ENCODE measurements at regions of chr19 and their contacts with region 1.

Region 1: GRCh38 chr19:860481-861101 is 1.1 kb downstream of the CFD start:
- DNase-seq: peak; percentile 94
- H3K4me3 ChIP-seq: peak overlapping the region; percentile 47 to 63 (median 48)
- H3K27ac ChIP-seq: peak overlapping the region in 3 of 4 donors; percentile 58 to 79 (median 65)
- H3K4me1 ChIP-seq: peaks cover 16 to 46% (median 44%) of the 10 kb centered on the region in 4 donors
- H3K27me3 ChIP-seq: peaks cover 0 to 71% (median 29%) of the 10 kb centered on the region in 4 donors
- CTCF ChIP-seq: peak in 2 of 3 experiments; percentile 11 to 23
- EP300 ChIP-seq: no peak
- POLR2A ChIP-seq: no peak

Region 2: GRCh38 chr19:664913-665443 is 195.6 kb before region 1 on chr19:
- intact Hi-C with region 1: loop called (anchors 5 kb)
- DNase-seq: no peak
- H3K4me3 ChIP-seq: peak overlapping the region; percentile 26 to 51 (median 41)
- H3K27ac ChIP-seq: peak overlapping the region; percentile 10 to 46 (median 20)
- H3K4me1 ChIP-seq: peaks cover 38 to 48% (median 46%) of the 10 kb centered on the region in 4 donors
- H3K27me3 ChIP-seq: no peaks in the 10 kb centered on the region
- CTCF ChIP-seq: peak; percentile 92 to 99 (median 97)
- EP300 ChIP-seq: no peak
- POLR2A ChIP-seq: no peak

Region 3: GRCh38 chr19:801030-801860 is 59.3 kb before region 1 on chr19:
- intact Hi-C with region 1: loop called (anchors 10 kb)
- DNase-seq: no peak
- H3K4me3 ChIP-seq: peak overlapping the region; percentile 23 to 50 (median 36)
- H3K27ac ChIP-seq: peak overlapping the region; percentile 95 to 100 (median 99)
- H3K4me1 ChIP-seq: peaks cover 60 to 75% (median 69%) of the 10 kb centered on the region in 4 donors
- H3K27me3 ChIP-seq: no peaks in the 10 kb centered on the region
- CTCF ChIP-seq: no peak
- EP300 ChIP-seq: no peak
- POLR2A ChIP-seq: no peak

Region 4: DNA sequence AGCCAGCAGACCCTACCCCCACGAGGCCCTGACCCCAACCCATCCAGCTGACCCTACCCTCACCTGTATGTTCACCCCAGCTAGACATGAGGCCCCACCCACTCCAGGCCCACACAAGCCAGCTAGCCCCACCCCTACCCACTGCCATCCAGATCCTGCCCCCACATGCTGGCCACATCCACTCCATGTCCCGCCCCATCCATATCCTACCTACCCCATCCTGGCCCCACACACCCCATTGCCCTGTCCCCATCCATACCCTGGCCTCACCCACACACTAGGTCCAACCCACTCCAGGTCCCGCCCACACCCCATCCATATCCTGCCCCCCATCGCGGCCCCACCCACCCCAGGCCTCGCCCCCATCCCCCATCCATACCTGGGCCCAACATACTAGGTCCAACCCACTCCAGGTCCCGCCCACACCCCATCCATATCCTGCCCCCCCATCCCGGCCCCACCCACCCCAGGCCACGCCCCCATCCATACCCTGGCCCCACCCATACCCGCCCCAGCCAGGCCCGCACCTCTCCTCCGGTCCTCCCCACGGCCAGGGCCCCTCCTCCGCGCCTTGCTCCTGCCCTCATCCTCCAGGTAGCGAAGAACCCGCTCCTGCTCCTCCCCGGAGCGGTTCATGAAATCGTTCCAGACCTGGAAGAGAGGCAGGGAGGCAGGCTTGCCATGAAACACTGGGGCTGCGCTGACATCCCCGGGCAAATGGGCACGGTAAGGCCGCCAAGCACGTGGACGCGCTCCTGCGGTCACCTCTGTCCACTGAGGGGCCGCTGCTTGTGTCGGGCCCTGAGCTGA is 39.9 kb after region 1 on chr19:
- intact Hi-C with region 1: no loop called
- DNase-seq: no peak
- H3K4me3 ChIP-seq: no peak overlapping the region
- H3K27ac ChIP-seq: no peak overlapping the region
- H3K4me1 ChIP-seq: peaks cover 0 to 13% (median 7%) of the 10 kb centered on the region in 4 donors
- H3K27me3 ChIP-seq: no peaks in the 10 kb centered on the region
- CTCF ChIP-seq: no peak
- EP300 ChIP-seq: no peak
- POLR2A ChIP-seq: no peak

Region 5: GRCh38 chr19:920051-920864 is 59.7 kb after region 1 on chr19:
- intact Hi-C with region 1: loop called (anchors 2 kb)
- DNase-seq: no peak
- H3K4me3 ChIP-seq: peak overlapping the region; percentile 24 to 45 (median 29)
- H3K27ac ChIP-seq: no peak overlapping the region
- H3K4me1 ChIP-seq: peaks cover 36 to 69% (median 62%) of the 10 kb centered on the region in 4 donors
- H3K27me3 ChIP-seq: peaks cover 3 to 54% (median 48%) of the 10 kb centered on the region in 4 donors
- CTCF ChIP-seq: no peak
- EP300 ChIP-seq: no peak
- POLR2A ChIP-seq: no peak

Region 6: GRCh38 chr19:984165-984967 is 123.8 kb after region 1 on chr19 and contains the start of gene WDR18:
- intact Hi-C with region 1: loop called (anchors 5 kb)
- DNase-seq: peak; percentile 97
- H3K4me3 ChIP-seq: peak within 1 kb of the TSS; percentile 82 to 98 (median 92)
- H3K27ac ChIP-seq: peak within 1 kb of the TSS; percentile 84 to 88 (median 87)
- H3K4me1 ChIP-seq: peaks cover 24 to 43% (median 32%) of the 10 kb centered on the region in 4 donors
- H3K27me3 ChIP-seq: peaks cover 0 to 9% (median 0%) of the 10 kb centered on the region in 4 donors
- CTCF ChIP-seq: peak in 2 of 3 experiments; percentile 43 to 46
- EP300 ChIP-seq: no peak
- POLR2A ChIP-seq: peak; percentile 35
- total RNA-seq, gene WDR18: 9.9 to 30.3 (median 28.4) TPM

Measured in esophagus muscularis mucosa (tissue), 4 donors.